ENCODE measurements at regions of chr17 and their contacts with region 1.

Region 1: GRCh38 chr17:76408052-76408849 is 23.8 kb downstream of the SPHK1 start:
- DNase-seq: peak; percentile 63
- ATAC-seq: peak; percentile 80
- H3K4me3 Mint-ChIP-seq: peak overlapping the region; percentile 35
- H3K27ac Mint-ChIP-seq: peak overlapping the region; percentile 30
- H3K4me1 Mint-ChIP-seq: peaks cover 47% of the 10 kb centered on the region
- H3K27me3 Mint-ChIP-seq: no peaks in the 10 kb centered on the region
- CTCF ChIP-seq: peak; percentile 85

Region 2: DNA sequence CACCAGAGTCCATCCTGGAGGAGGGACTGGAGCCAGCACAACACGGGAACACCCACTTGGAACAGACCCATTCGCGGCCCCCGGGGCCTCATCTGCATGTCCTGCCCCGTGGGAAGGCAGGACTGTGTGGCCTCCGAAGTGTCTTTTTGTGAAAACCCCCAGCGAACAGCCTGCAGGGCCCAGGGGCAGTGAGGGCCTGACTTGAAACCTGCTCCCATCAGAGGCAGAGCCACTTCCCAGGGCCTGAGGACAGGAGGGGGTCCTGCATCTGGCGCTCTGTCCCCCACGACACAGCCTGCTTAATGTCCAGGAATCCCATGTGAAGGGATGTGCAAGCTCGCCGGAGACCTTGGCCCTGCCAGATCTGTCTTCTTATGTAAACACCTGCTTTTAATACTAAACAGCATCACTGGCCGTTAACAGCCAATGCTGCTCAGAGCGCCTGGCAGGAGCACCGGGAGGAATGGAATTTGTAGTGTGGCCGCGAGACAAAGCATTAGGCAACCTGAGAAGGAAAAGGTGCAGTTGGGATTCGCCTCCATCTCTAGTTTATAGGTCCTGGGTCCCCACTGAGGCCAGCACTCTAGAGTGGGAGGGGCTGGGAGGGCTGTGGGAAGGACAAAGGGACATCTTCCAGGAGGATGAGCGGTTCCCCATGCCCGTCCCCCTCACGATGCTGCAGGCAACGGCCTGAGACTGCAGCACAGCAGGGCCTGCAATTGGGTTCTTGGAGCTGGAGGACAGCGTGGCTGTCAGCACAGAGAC is 371.6 kb before region 1 on chr17:
- CTCF ChIA-PET with region 1: no interaction called
- POLR2A ChIA-PET with region 1: no interaction called
- intact Hi-C with region 1: no loop called
- DNase-seq: no peak
- ATAC-seq: no peak
- H3K4me3 Mint-ChIP-seq: no peak overlapping the region
- H3K27ac Mint-ChIP-seq: no peak overlapping the region
- H3K4me1 Mint-ChIP-seq: no peaks in the 10 kb centered on the region
- H3K27me3 Mint-ChIP-seq: no peaks in the 10 kb centered on the region
- CTCF ChIP-seq: no peak

Region 3: GRCh38 chr17:76121932-76122430 is 286.3 kb before region 1 on chr17:
- CTCF ChIA-PET with region 1: no interaction called
- POLR2A ChIA-PET with region 1: no interaction called
- intact Hi-C with region 1: loop called (anchors 5 kb)
- DNase-seq: no peak
- ATAC-seq: peak; percentile 29
- H3K4me3 Mint-ChIP-seq: peak overlapping the region; percentile 62
- H3K27ac Mint-ChIP-seq: peak overlapping the region; percentile 50
- H3K4me1 Mint-ChIP-seq: peaks cover 17% of the 10 kb centered on the region
- H3K27me3 Mint-ChIP-seq: peaks cover 3% of the 10 kb centered on the region
- CTCF ChIP-seq: no peak

Region 4: GRCh38 chr17:76307299-76307965 is 100.8 kb before region 1 on chr17:
- CTCF ChIA-PET with region 1: no interaction called
- POLR2A ChIA-PET with region 1: no interaction called
- intact Hi-C with region 1: no loop called
- DNase-seq: no peak
- ATAC-seq: no peak
- H3K4me3 Mint-ChIP-seq: no peak overlapping the region
- H3K27ac Mint-ChIP-seq: no peak overlapping the region
- H3K4me1 Mint-ChIP-seq: peaks cover 5% of the 10 kb centered on the region
- H3K27me3 Mint-ChIP-seq: no peaks in the 10 kb centered on the region
- CTCF ChIP-seq: no peak

Region 5: GRCh38 chr17:76427501-76428231 is 19.4 kb after region 1 on chr17:
- CTCF ChIA-PET with region 1: interaction called, 14 read pairs
- POLR2A ChIA-PET with region 1: interaction called, 3 read pairs
- intact Hi-C with region 1: loop called (anchors 2 kb)
- DNase-seq: no peak
- ATAC-seq: peak; percentile 86
- H3K4me3 Mint-ChIP-seq: peak overlapping the region; percentile 32
- H3K27ac Mint-ChIP-seq: peak overlapping the region; percentile 77
- H3K4me1 Mint-ChIP-seq: peaks cover 80% of the 10 kb centered on the region
- H3K27me3 Mint-ChIP-seq: no peaks in the 10 kb centered on the region
- CTCF ChIP-seq: no peak

Region 6: GRCh38 chr17:76467366-76467765 is 59.1 kb after region 1 on chr17 and contains the start of gene AANAT:
- CTCF ChIA-PET with region 1: interaction called, 4 read pairs
- POLR2A ChIA-PET with region 1: no interaction called
- intact Hi-C with region 1: loop called (anchors 1 kb)
- DNase-seq: no peak
- ATAC-seq: no peak
- H3K4me3 Mint-ChIP-seq: no peak within 1 kb of the TSS
- H3K27ac Mint-ChIP-seq: peak within 1 kb of the TSS; percentile 56
- H3K4me1 Mint-ChIP-seq: peaks cover 28% of the 10 kb centered on the region
- H3K27me3 Mint-ChIP-seq: no peaks in the 10 kb centered on the region
- CTCF ChIP-seq: no peak
- total RNA-seq, gene AANAT: 0.55 TPM in 1 of 2 replicates, not detected in the other

Region 7: DNA sequence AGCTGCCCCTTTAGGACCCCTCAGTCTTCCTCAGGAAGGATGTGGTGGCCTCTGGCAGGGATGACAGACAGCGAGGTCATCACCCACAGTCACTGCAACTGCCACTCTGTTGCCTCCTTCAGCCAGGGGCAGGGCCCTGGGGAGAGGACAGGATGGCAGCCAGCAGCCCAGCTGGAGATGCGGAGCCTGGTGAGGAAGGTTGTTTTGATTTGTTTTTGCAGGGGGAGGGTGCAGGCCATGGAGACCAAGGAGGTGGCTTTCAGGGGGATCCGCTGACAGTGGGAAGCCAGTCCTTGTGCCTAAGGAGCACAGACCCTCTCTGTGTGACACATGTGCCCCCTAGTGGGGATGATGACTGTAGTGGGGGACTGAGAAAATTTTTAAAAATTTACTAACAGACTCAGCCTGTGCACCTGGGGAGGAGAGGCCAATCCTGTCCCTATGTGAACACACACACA is 139.0 kb after region 1 on chr17:
- CTCF ChIA-PET with region 1: no interaction called
- POLR2A ChIA-PET with region 1: no interaction called
- intact Hi-C with region 1: loop called (anchors 1 kb)
- DNase-seq: no peak
- ATAC-seq: peak; percentile 94
- H3K4me3 Mint-ChIP-seq: no peak overlapping the region
- H3K27ac Mint-ChIP-seq: no peak overlapping the region
- H3K4me1 Mint-ChIP-seq: peaks cover 5% of the 10 kb centered on the region
- H3K27me3 Mint-ChIP-seq: peaks cover 8% of the 10 kb centered on the region
- CTCF ChIP-seq: no peak

Region 8: DNA sequence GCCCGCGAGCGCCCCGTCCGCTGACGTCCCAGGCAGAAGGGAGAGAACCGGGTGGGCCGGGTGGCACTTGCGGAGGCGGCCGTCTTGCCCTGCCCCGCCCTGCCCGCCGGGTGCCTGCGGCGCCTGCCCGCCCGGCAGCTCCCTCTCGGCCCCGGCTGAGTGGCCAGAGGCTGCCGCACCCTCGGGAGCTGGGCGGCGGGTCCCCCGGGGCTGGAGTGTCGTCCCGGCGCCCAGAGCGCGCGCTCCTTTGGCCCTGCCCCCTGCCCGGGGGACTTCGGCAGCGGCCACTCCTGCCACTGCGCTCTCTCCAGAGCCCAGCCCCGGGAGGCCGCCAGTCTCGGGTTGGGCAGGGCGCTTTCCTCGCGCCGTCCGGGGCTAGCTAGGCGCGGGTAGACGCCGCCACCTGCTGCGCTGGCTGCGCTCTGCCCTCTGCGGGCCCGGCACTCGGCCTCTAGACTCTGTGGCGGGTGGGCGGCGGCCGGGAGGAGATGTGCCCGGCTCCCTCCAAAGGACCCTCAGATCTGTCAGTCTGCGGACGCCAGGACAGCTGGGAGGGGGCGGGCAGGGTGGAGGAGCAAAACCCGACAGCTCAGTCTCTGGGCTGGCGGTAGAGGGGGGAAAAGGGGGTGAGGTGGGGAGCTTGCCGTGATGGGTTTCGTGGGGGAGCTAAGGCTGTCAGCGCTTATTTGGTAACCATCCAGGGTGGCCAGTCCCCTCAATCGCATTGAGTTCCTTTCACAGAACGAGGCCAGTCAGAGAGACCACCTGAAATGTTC is 177.8 kb after region 1 on chr17 and contains the start of gene ST6GALNAC2:
- CTCF ChIA-PET with region 1: no interaction called
- POLR2A ChIA-PET with region 1: no interaction called
- intact Hi-C with region 1: no loop called
- DNase-seq: peak; percentile 52
- ATAC-seq: peak; percentile 75
- H3K4me3 Mint-ChIP-seq: peak within 1 kb of the TSS; percentile 75
- H3K27ac Mint-ChIP-seq: no peak within 1 kb of the TSS
- H3K4me1 Mint-ChIP-seq: peaks cover 18% of the 10 kb centered on the region
- H3K27me3 Mint-ChIP-seq: peaks cover 39% of the 10 kb centered on the region
- CTCF ChIP-seq: no peak
- total RNA-seq, gene ST6GALNAC2: not detected in 2 replicates